GM12878 (cell line): ENCODE measurements at regions of chr1 and their contacts with region 1.

Region 1: DNA sequence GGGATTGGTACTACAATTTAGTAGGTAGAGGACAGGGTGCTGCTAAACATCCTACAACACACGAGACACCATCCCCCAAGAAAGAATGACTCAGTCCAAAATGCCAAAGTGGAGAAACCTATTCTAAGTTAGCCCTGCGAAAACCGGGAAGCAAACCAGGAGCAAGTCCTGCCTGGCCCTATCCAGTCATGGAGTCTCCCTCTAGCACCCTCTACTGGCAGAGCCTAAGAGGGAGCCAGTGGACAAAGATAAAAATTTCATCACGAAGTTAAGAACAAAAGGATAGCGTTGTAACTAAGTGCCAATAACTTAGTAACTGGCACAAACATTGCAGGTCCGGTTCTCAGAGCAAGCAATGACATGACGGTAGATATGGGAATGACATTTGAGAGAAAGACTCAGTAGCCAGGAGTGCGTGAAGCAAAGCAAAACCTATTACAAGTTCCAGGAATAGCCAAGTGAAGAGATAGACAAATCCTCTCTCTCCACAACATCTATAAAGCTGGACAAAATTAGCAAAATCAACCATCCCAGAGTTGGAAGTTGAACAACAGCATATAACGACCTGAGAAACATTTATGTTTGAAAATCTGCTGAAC is 383.5 kb downstream of the OMA1 start:
- DNase-seq: no peak
- ATAC-seq: peak; percentile 76
- H3K4me3 ChIP-seq: no peak overlapping the region
- H3K27ac ChIP-seq: no peak overlapping the region
- H3K4me1 ChIP-seq: no peaks in the 10 kb centered on the region
- H3K27me3 ChIP-seq: no peaks in the 10 kb centered on the region
- CTCF ChIP-seq: peak; percentile 75 to 88 (median 83)
- EP300 ChIP-seq: no peak; a peak in 1 of 4 replicates
- POLR2A ChIP-seq: no peak
- RAD21 ChIP-seq: peak; percentile 73

Region 2: DNA sequence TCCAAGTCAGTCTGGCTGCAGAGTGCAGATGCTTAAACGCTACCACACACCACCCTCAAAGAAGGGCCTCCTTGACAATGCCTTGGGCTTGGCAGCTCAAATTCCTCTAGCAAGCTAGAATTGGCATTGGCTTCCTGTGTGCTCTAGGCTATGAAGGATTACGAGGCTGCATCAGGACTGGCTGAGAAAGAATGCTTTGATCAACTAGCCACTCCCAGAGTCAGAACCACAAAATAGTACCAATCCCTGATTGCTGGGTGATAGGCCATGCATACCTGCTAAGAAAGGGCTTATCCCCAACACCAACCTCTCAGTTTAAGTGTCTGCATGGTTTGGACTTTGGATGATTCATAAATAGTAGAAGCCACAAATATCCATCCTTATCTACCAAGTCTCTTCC is 121.4 kb before region 1 on chr1:
- CTCF ChIA-PET with region 1: interaction called, 12 read pairs
- POLR2A ChIA-PET with region 1: no interaction called
- RAD21 ChIA-PET with region 1: interaction called, 6 read pairs
- SMC1A ChIA-PET with region 1: interaction called, 8 read pairs
- in situ Hi-C with region 1: no loop called
- intact Hi-C with region 1: no loop called
- DNase-seq: no peak
- ATAC-seq: no peak
- H3K4me3 ChIP-seq: no peak overlapping the region
- H3K27ac ChIP-seq: no peak overlapping the region
- H3K4me1 ChIP-seq: no peaks in the 10 kb centered on the region
- H3K27me3 ChIP-seq: peaks cover 0 to 1% of the 10 kb centered on the region in 2 experiments; a peak in 2 of 4 replicates
- CTCF ChIP-seq: no peak
- EP300 ChIP-seq: no peak
- POLR2A ChIP-seq: no peak
- RAD21 ChIP-seq: no peak

Region 3: GRCh38 chr1:58089898-58090534 is 73.0 kb before region 1 on chr1:
- CTCF ChIA-PET with region 1: interaction called, 11 read pairs
- POLR2A ChIA-PET with region 1: interaction called, 4 read pairs
- RAD21 ChIA-PET with region 1: interaction called, 5 read pairs
- SMC1A ChIA-PET with region 1: interaction called, 28 read pairs
- in situ Hi-C with region 1: no loop called
- intact Hi-C with region 1: no loop called
- DNase-seq: no peak
- ATAC-seq: no peak
- H3K4me3 ChIP-seq: no peak overlapping the region
- H3K27ac ChIP-seq: no peak overlapping the region
- H3K4me1 ChIP-seq: no peaks in the 10 kb centered on the region
- H3K27me3 ChIP-seq: no peaks in the 10 kb centered on the region; a peak in 1 of 4 replicates
- CTCF ChIP-seq: no peak
- EP300 ChIP-seq: no peak
- POLR2A ChIP-seq: no peak
- RAD21 ChIP-seq: no peak

Region 4: GRCh38 chr1:58119971-58120370 is 43.1 kb before region 1 on chr1:
- CTCF ChIA-PET with region 1: interaction called, 8 read pairs
- POLR2A ChIA-PET with region 1: interaction called, 5 read pairs
- RAD21 ChIA-PET with region 1: interaction called, 11 read pairs
- SMC1A ChIA-PET with region 1: interaction called, 13 read pairs
- in situ Hi-C with region 1: no loop called
- intact Hi-C with region 1: no loop called
- DNase-seq: no peak
- ATAC-seq: no peak
- H3K4me3 ChIP-seq: no peak overlapping the region
- H3K27ac ChIP-seq: no peak overlapping the region
- H3K4me1 ChIP-seq: no peaks in the 10 kb centered on the region
- H3K27me3 ChIP-seq: no peaks in the 10 kb centered on the region
- CTCF ChIP-seq: no peak
- EP300 ChIP-seq: no peak
- POLR2A ChIP-seq: no peak
- RAD21 ChIP-seq: no peak

Region 5: GRCh38 chr1:58211869-58212268 is 48.8 kb after region 1 on chr1:
- CTCF ChIA-PET with region 1: no interaction called
- POLR2A ChIA-PET with region 1: no interaction called
- RAD21 ChIA-PET with region 1: no interaction called
- SMC1A ChIA-PET with region 1: no interaction called
- in situ Hi-C with region 1: no loop called
- intact Hi-C with region 1: no loop called
- DNase-seq: no peak
- ATAC-seq: no peak
- H3K4me3 ChIP-seq: no peak overlapping the region
- H3K27ac ChIP-seq: no peak overlapping the region
- H3K4me1 ChIP-seq: no peaks in the 10 kb centered on the region
- H3K27me3 ChIP-seq: no peaks in the 10 kb centered on the region
- CTCF ChIP-seq: no peak
- EP300 ChIP-seq: no peak
- POLR2A ChIP-seq: no peak
- RAD21 ChIP-seq: no peak

Region 6: GRCh38 chr1:58412071-58412580 is 249.1 kb after region 1 on chr1:
- CTCF ChIA-PET with region 1: no interaction called
- POLR2A ChIA-PET with region 1: no interaction called
- RAD21 ChIA-PET with region 1: no interaction called
- SMC1A ChIA-PET with region 1: no interaction called
- in situ Hi-C with region 1: no loop called
- intact Hi-C with region 1: no loop called
- DNase-seq: no peak
- ATAC-seq: no peak
- H3K4me3 ChIP-seq: no peak overlapping the region
- H3K27ac ChIP-seq: no peak overlapping the region
- H3K4me1 ChIP-seq: no peaks in the 10 kb centered on the region
- H3K27me3 ChIP-seq: no peaks in the 10 kb centered on the region
- CTCF ChIP-seq: no peak
- EP300 ChIP-seq: no peak
- POLR2A ChIP-seq: no peak
- RAD21 ChIP-seq: no peak